A549 (cell line): ENCODE measurements at regions of chr12 and their contacts with region 1.

Region 1: GRCh38 chr12:3020850-3021435 is 56.2 kb upstream of the TSPAN9 start:
- DNase-seq: no peak
- ATAC-seq: no peak
- H3K4me3 ChIP-seq: no peak overlapping the region
- H3K27ac ChIP-seq: no peak overlapping the region
- H3K4me1 ChIP-seq: no peaks in the 10 kb centered on the region
- CTCF ChIP-seq: no peak
- EP300 ChIP-seq: no peak
- POLR2A ChIP-seq: no peak
- RAD21 ChIP-seq: no peak

Region 2: DNA sequence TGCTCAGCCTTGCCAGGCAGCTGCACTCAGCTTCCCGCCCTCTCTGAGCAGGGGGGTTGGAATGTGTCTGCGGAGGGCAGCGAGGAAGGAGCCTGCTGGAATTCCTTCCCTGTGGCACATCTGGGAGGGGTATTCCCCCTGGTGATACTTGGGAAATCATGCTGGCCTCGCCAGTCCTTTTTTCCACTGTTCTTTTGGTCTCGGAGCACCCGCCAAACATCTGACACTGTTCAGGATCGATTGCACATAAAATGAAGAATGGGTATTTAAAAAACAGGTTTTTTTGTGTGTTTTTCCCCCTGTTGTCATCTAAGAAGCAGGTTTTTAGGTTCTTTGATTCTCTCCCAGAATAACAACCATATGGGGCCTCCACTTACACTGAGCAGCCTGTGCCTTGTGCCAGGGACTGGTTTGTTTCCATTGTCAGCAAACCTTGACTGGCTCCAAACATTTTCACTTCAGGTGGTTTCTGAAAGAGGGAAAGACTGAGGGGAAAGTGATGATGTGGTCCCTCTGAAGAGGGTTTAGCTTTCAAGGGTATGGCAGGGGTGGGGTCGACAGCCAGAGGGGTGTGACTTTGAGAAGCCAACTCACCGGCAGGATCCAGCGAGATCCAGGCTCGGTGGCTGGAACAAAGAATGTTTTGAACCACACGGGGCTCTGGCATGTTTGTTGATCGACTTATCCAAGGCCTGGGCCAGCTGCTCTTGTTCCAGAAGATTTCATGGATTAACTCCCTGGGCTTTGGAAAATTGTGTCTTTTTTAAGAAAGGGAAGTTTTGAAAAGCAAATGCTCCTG is 753.0 kb before region 1 on chr12:
- CTCF ChIA-PET with region 1: no interaction called
- POLR2A ChIA-PET with region 1: no interaction called
- DNase-seq: no peak
- ATAC-seq: no peak
- H3K4me3 ChIP-seq: no peak overlapping the region
- H3K27ac ChIP-seq: no peak overlapping the region
- H3K4me1 ChIP-seq: no peaks in the 10 kb centered on the region
- CTCF ChIP-seq: no peak
- EP300 ChIP-seq: no peak
- POLR2A ChIP-seq: no peak
- RAD21 ChIP-seq: no peak

Region 3: DNA sequence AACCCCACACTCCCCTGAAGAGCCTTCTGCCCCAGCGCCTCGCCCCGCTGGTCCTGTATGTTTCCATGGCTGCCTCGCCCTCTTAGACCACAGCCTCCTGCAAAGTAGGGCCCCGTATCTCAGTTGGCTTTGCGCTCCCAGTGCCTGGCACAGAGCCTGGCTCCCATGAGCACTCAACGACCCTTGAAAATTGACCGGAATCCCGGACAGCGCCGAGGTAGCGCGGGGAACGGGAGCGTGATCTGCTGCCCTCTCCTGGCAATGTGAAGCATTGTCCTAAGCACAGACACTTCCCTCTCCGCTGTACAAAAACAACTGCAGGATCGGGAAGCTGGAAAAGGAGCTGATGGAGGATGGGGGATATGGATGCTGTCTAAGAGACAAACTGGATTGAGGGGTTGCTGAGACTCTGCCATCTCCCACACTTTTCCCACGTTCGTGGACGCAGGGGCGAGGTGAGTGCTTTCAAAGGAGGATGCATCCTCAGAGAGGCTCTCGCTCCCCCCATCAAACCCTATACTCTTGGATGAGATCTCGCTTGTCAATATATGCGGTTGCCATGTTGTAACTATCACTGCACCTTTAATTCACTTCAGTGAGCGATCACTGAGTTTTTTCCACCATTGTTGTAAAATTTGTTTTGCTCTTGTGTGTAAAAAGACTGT is 236.9 kb before region 1 on chr12:
- CTCF ChIA-PET with region 1: no interaction called
- POLR2A ChIA-PET with region 1: no interaction called
- DNase-seq: peak; percentile 62 to 68
- ATAC-seq: peak; percentile 96 to 98
- H3K4me3 ChIP-seq: peak overlapping the region; percentile 27; the same call in 2 of the 3 replicates
- H3K27ac ChIP-seq: no peak overlapping the region
- H3K4me1 ChIP-seq: 0 out of 3 replicates have a peak, but pooled peaks cover 6% of the 10 kb centered on the region
- CTCF ChIP-seq: peak; percentile 72
- EP300 ChIP-seq: no peak
- POLR2A ChIP-seq: no peak
- RAD21 ChIP-seq: peak; percentile 64 to 74

Region 4: GRCh38 chr12:3034067-3034750 is 13.3 kb after region 1 on chr12:
- CTCF ChIA-PET with region 1: interaction called, 24 read pairs
- POLR2A ChIA-PET with region 1: no interaction called
- DNase-seq: peak; percentile 79 to 82
- ATAC-seq: peak; percentile 92 to 95
- H3K4me3 ChIP-seq: no peak overlapping the region
- H3K27ac ChIP-seq: no peak overlapping the region
- H3K4me1 ChIP-seq: no peaks in the 10 kb centered on the region
- CTCF ChIP-seq: peak; percentile 50
- EP300 ChIP-seq: no peak
- POLR2A ChIP-seq: no peak
- RAD21 ChIP-seq: peak; percentile 54 to 69

Region 5: DNA sequence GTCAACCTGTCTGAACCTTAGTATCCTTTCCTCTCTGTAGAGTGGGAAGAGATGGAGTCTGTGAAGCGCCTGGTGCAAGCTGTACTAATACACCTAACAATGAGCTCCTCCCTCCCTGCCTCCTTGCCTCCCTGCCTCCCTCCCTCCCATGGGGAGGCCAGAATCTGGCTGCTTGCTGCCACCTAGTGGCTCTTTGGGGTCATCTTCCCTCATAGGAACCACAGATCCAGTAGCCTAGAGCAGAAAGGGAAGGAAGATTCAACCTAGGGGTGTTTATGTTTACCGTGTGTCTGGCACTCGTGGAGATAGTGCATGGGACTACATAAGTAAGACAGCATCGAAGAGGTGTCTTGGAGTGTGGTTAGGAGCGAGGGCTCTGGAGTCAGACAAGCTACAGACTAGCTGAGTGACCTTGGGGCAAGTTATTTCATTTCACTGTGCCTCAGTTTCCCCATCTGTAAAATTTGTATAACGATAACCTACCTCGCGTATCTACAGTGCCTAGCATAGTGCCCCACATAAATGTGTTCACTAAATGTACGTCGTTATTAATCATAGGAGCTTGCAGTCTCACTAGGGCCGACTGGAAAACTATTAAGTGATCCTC is 20.7 kb after region 1 on chr12:
- CTCF ChIA-PET with region 1: interaction called, 10 read pairs
- POLR2A ChIA-PET with region 1: no interaction called
- DNase-seq: peak; percentile 87 to 90
- ATAC-seq: peak; percentile 85 to 95
- H3K4me3 ChIP-seq: no peak overlapping the region
- H3K27ac ChIP-seq: no peak overlapping the region
- H3K4me1 ChIP-seq: no peaks in the 10 kb centered on the region
- CTCF ChIP-seq: peak; percentile 78
- EP300 ChIP-seq: no peak
- POLR2A ChIP-seq: no peak
- RAD21 ChIP-seq: peak; percentile 69 to 74